Tibial artery (tissue), 4 donors: ENCODE measurements at regions of chr9 and their contacts with region 1.

Region 1: DNA sequence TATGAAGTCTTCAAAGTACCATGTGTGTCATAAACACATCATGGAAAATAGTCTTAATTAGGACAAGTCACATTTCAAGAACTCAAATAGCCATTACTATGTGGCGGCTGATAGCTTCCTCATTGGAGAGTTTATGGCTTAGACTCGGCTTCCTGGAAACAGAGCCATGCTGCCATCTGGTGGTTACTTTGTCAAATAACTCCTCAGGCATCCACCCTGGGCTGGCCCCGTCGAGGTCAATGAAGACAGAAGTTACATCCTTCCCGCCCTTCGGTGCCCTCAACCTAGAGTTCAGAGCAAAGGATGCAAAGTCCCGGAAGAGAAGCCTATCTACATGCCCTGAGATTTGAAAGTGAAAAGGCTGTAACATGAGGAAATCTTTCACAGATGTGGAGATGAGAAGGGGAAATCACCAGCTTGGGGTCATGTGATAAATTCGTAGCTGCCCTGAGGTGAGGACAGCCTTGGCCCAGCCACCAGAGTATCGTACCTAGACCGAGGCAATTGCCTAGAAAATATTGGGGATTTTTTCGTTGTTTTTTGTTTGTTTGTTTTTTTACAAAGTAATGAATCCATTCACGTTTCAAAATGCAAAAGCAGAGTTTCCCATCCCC is 45.5 kb upstream of the ZNF169 start:
- DNase-seq: peak; percentile 57 to 78
- H3K4me3 ChIP-seq: no peak overlapping the region
- H3K27ac ChIP-seq: no peak overlapping the region
- H3K4me1 ChIP-seq: peaks cover 0 to 9% (median 0%) of the 10 kb centered on the region in 4 donors
- H3K27me3 ChIP-seq: no peaks in the 10 kb centered on the region
- CTCF ChIP-seq: peak; percentile 77 to 89

Region 2: DNA sequence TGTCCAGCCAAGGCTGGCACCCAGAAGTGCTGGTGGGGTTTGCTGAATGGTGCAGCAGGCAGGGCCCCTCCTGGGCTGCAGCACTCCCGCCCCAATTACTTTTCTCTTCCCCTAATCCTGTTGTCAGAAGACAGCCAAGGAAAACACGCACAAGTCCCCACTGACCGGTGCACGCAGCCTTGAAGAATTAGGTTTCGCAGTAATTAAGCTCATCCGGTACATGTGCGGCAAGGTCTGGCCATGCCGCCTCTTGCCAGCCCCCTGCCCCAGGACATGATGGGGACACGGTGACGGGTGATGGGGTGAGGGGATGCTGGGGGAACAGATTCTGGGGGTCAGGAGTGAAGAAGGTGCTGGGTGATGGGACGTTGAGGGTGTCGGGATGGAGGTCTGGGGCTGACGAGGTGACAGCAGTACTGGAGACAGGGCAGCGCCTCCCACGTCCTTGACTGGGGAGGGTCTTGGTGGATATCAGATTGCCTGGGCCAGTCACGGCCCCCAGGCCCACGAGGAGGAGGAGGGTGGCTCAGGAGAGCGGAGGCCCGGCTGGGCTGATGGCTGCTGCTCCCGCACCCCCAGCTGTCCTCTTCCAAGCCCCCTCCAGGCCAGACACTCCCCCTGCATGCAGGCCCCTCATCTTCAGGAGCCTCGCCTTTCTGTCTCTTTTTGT is 293.4 kb before region 1 on chr9:
- intact Hi-C with region 1: no loop called
- DNase-seq: no peak
- H3K4me3 ChIP-seq: no peak overlapping the region
- H3K27ac ChIP-seq: no peak overlapping the region
- H3K4me1 ChIP-seq: no peaks in the 10 kb centered on the region
- H3K27me3 ChIP-seq: peaks cover 0 to 19% of the 10 kb centered on the region in 2 donors
- CTCF ChIP-seq: no peak

Region 3: DNA sequence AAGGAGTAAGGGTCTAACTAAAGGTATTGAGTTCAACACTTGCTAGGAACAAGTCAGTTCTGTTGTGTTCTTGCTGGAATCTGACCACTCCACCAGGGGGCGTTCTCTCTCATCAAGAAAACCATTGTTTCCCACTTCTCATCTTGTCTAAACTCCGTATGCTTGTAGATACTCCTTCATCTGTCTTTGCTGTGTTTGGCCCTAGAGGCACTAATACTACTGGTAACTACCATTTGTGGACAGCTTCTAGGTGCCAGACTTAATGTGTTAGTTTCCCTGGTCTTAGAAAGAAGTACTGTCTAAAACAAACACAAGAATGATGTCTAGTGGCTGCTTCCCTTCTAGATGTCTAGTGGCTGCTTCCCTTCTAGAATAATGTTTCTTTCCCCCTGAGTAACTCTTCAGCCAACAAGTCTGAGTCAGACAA is 148.1 kb before region 1 on chr9:
- intact Hi-C with region 1: loop called (anchors 2 kb)
- DNase-seq: peak; percentile 81 to 86
- H3K4me3 ChIP-seq: no peak overlapping the region
- H3K27ac ChIP-seq: peak overlapping the region; percentile 26 to 48
- H3K4me1 ChIP-seq: peaks cover 0 to 8% (median 3%) of the 10 kb centered on the region in 4 donors
- H3K27me3 ChIP-seq: no peaks in the 10 kb centered on the region
- CTCF ChIP-seq: peak; percentile 78 to 80